ENCODE measurements at regions of chr12 and their contacts with region 1.

Region 1: GRCh38 chr12:96399919-96400797 is at the start of gene CDK17:
- DNase-seq: peak; percentile 87 to 93 (median 90)
- ATAC-seq: peak; percentile 87
- H3K4me3 ChIP-seq: peak within 1 kb of the TSS; percentile 82
- H3K4me3 Mint-ChIP-seq: peak within 1 kb of the TSS; percentile 94 to 98 (median 96)
- H3K27ac ChIP-seq: peak within 1 kb of the TSS; percentile 98
- H3K27ac Mint-ChIP-seq: peak within 1 kb of the TSS; percentile 96 to 99 (median 97)
- H3K4me1 ChIP-seq: peaks cover 19 to 22% of the 10 kb centered on the region in 2 donors
- H3K4me1 Mint-ChIP-seq: peaks cover 32 to 50% (median 44%) of the 10 kb centered on the region in 7 donors
- H3K27me3 ChIP-seq: no peaks in the 10 kb centered on the region
- H3K27me3 Mint-ChIP-seq: no peaks in the 10 kb centered on the region
- total RNA-seq, gene CDK17: 39.7 to 112 (median 67.9) TPM

Region 2: GRCh38 chr12:96035278-96036236 is 364.6 kb before region 1 on chr12 and contains the start of gene LTA4H:
- CTCF ChIA-PET with region 1: interaction called, 4 read pairs
- POLR2A ChIA-PET with region 1: no interaction called
- intact Hi-C with region 1: loop called (anchors 1 kb)
- DNase-seq: peak; percentile 86 to 99 (median 97)
- ATAC-seq: peak; percentile 97
- H3K4me3 ChIP-seq: peak within 1 kb of the TSS; percentile 85
- H3K4me3 Mint-ChIP-seq: no peak within 1 kb of the TSS
- H3K27ac ChIP-seq: peak within 1 kb of the TSS; percentile 81
- H3K27ac Mint-ChIP-seq: no peak within 1 kb of the TSS
- H3K4me1 ChIP-seq: peaks cover 4 to 9% of the 10 kb centered on the region in 2 donors
- H3K4me1 Mint-ChIP-seq: peaks cover 5 to 19% (median 17%) of the 10 kb centered on the region in 7 donors
- H3K27me3 ChIP-seq: no peaks in the 10 kb centered on the region
- H3K27me3 Mint-ChIP-seq: no peaks in the 10 kb centered on the region
- total RNA-seq, gene LTA4H: 52.5 to 151 (median 63.4) TPM

Region 3: DNA sequence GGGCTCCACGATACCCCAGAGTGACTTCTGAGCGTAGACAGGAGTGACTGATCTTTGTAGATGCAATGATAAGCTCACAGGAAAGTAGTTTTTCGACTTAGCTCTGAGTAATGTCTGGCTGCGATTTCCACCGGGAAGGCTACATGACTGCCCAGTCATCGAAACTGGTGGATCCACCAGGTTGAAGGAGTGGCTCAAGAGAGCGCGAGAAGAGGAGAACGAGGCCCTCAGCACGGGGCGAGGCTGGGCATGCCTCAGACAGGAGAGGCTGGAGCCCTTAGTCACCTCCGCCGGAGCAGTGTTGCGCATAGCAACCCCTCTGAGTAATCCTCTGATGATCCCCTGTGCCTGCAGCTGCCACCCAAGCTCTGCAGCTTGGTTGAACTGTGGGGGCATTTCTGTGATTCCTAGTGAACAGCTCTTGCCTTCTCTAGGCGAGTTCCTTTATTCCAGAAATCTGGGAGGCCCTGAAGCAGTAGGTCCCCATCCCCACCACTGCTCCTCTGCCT is 180.4 kb before region 1 on chr12:
- CTCF ChIA-PET with region 1: interaction called, 20 read pairs
- POLR2A ChIA-PET with region 1: interaction called, 4 read pairs
- intact Hi-C with region 1: loop called (anchors 1 to 2 kb)
- DNase-seq: no peak
- ATAC-seq: no peak
- H3K4me3 ChIP-seq: no peak overlapping the region
- H3K4me3 Mint-ChIP-seq: no peak overlapping the region
- H3K27ac ChIP-seq: no peak overlapping the region
- H3K27ac Mint-ChIP-seq: peak overlapping the region in 2 of 9 donors; percentile 20 to 51
- H3K4me1 ChIP-seq: peaks cover 6 to 7% of the 10 kb centered on the region in 2 donors
- H3K4me1 Mint-ChIP-seq: peaks cover 12 to 60% (median 40%) of the 10 kb centered on the region in 7 donors
- H3K27me3 ChIP-seq: no peaks in the 10 kb centered on the region
- H3K27me3 Mint-ChIP-seq: no peaks in the 10 kb centered on the region

Region 4: GRCh38 chr12:96314723-96315122 is 85.4 kb before region 1 on chr12:
- CTCF ChIA-PET with region 1: interaction called, 7 read pairs
- POLR2A ChIA-PET with region 1: interaction called, 6 read pairs
- intact Hi-C with region 1: loop called in 1 of 2 experiments (anchors 2 kb)
- DNase-seq: no peak
- ATAC-seq: no peak
- H3K4me3 ChIP-seq: no peak overlapping the region
- H3K4me3 Mint-ChIP-seq: peak overlapping the region in 7 of 10 donors; percentile 20 to 58 (median 38)
- H3K27ac ChIP-seq: no peak overlapping the region
- H3K27ac Mint-ChIP-seq: peak overlapping the region in 7 of 9 donors; percentile 59 to 97 (median 81)
- H3K4me1 ChIP-seq: peaks cover 0 to 4% of the 10 kb centered on the region in 2 donors
- H3K4me1 Mint-ChIP-seq: peaks cover 5 to 37% (median 20%) of the 10 kb centered on the region in 7 donors
- H3K27me3 ChIP-seq: no peaks in the 10 kb centered on the region
- H3K27me3 Mint-ChIP-seq: no peaks in the 10 kb centered on the region

Region 5: DNA sequence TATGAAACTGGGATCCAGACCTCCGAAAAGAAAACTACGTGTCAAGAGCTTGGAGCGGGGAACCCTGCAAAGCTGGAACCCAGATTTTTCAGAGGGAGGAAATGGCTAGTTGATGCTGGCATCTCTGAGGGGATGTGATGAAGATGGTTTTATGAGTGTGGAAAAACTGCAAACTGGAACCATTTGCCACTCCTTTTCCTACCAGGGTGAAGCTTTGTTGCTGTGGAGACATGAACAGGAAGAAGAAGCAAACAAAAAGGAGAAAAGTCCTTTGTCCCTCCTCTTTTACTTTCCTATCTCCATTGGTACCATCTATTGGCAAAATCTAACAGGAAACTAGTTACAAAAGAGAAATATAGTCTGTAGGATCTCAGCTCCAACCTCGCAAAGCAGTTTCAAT is 39.1 kb before region 1 on chr12:
- CTCF ChIA-PET with region 1: interaction called, 5 read pairs
- POLR2A ChIA-PET with region 1: interaction called, 6 read pairs
- intact Hi-C with region 1: loop called (anchors 5 kb)
- DNase-seq: no peak
- ATAC-seq: no peak
- H3K4me3 ChIP-seq: no peak overlapping the region
- H3K4me3 Mint-ChIP-seq: peak overlapping the region in 4 of 10 donors; percentile 1 to 48 (median 28)
- H3K27ac ChIP-seq: no peak overlapping the region
- H3K27ac Mint-ChIP-seq: peak overlapping the region in 4 of 9 donors; percentile 8 to 59 (median 23)
- H3K4me1 ChIP-seq: peaks cover 21 to 57% of the 10 kb centered on the region in 2 donors
- H3K4me1 Mint-ChIP-seq: peaks cover 30 to 90% (median 84%) of the 10 kb centered on the region in 7 donors
- H3K27me3 ChIP-seq: no peaks in the 10 kb centered on the region
- H3K27me3 Mint-ChIP-seq: no peaks in the 10 kb centered on the region

Region 6: GRCh38 chr12:96434107-96434506 is 33.9 kb after region 1 on chr12:
- CTCF ChIA-PET with region 1: interaction called, 3 read pairs
- POLR2A ChIA-PET with region 1: interaction called, 6 read pairs
- intact Hi-C with region 1: loop called (anchors 1 kb)
- DNase-seq: peak; percentile 10 to 92 (median 88)
- ATAC-seq: peak; percentile 100
- H3K4me3 ChIP-seq: no peak overlapping the region
- H3K4me3 Mint-ChIP-seq: peak overlapping the region; percentile 10 to 81 (median 64)
- H3K27ac ChIP-seq: peak overlapping the region; percentile 81
- H3K27ac Mint-ChIP-seq: peak overlapping the region; percentile 60 to 94 (median 84)
- H3K4me1 ChIP-seq: peaks cover 15 to 20% of the 10 kb centered on the region in 2 donors
- H3K4me1 Mint-ChIP-seq: peaks cover 24 to 52% (median 43%) of the 10 kb centered on the region in 7 donors
- H3K27me3 ChIP-seq: no peaks in the 10 kb centered on the region
- H3K27me3 Mint-ChIP-seq: no peaks in the 10 kb centered on the region

Region 7: GRCh38 chr12:96516472-96517430 is 116.6 kb after region 1 on chr12:
- CTCF ChIA-PET with region 1: interaction called, 50 read pairs
- POLR2A ChIA-PET with region 1: interaction called, 13 read pairs
- intact Hi-C with region 1: loop called (anchors 1 kb)
- DNase-seq: peak; percentile 59 to 84 (median 78)
- ATAC-seq: peak; percentile 95
- H3K4me3 ChIP-seq: no peak overlapping the region
- H3K4me3 Mint-ChIP-seq: peak overlapping the region in 5 of 10 donors; percentile 4 to 46 (median 33)
- H3K27ac ChIP-seq: no peak overlapping the region
- H3K27ac Mint-ChIP-seq: peak overlapping the region in 8 of 9 donors; percentile 46 to 86 (median 78)
- H3K4me1 ChIP-seq: peaks cover 4 to 5% of the 10 kb centered on the region in 2 donors
- H3K4me1 Mint-ChIP-seq: peaks cover 4 to 22% (median 15%) of the 10 kb centered on the region in 7 donors
- H3K27me3 ChIP-seq: no peaks in the 10 kb centered on the region
- H3K27me3 Mint-ChIP-seq: no peaks in the 10 kb centered on the region

Region 8: GRCh38 chr12:97474161-97474560 is 1074.0 kb after region 1 on chr12:
- CTCF ChIA-PET with region 1: no interaction called
- POLR2A ChIA-PET with region 1: no interaction called
- intact Hi-C with region 1: no loop called
- DNase-seq: no peak
- ATAC-seq: no peak
- H3K4me3 ChIP-seq: no peak overlapping the region
- H3K4me3 Mint-ChIP-seq: no peak overlapping the region
- H3K27ac ChIP-seq: no peak overlapping the region
- H3K27ac Mint-ChIP-seq: no peak overlapping the region
- H3K4me1 ChIP-seq: no peaks in the 10 kb centered on the region
- H3K4me1 Mint-ChIP-seq: peaks cover 0 to 5% (median 0%) of the 10 kb centered on the region in 7 donors
- H3K27me3 ChIP-seq: no peaks in the 10 kb centered on the region
- H3K27me3 Mint-ChIP-seq: peaks cover 0 to 5% (median 0%) of the 10 kb centered on the region in 5 donors